ENCODE measurements at regions of chr3 and their contacts with region 1.

Region 1: GRCh38 chr3:69306239-69307185 is 79.4 kb downstream of the FRMD4B start:
- DNase-seq: peak in 9 of 10 donors; percentile 28 to 76 (median 64)
- H3K4me3 ChIP-seq: peak overlapping the region in 10 of 59 donors; percentile 0 to 36 (median 4)
- H3K27ac ChIP-seq: peak overlapping the region; percentile 40 to 97 (median 90)
- H3K27me3 ChIP-seq: peaks cover 0 to 4% (median 0%) of the 10 kb centered on the region in 45 donors
- CTCF ChIP-seq: peak; percentile 84 to 99 (median 95)

Region 2: GRCh38 chr3:69143605-69144004 is 162.9 kb before region 1 on chr3:
- intact Hi-C with region 1: no loop called
- DNase-seq: no peak
- H3K4me3 ChIP-seq: no peak overlapping the region
- H3K27ac ChIP-seq: no peak overlapping the region
- H3K27me3 ChIP-seq: peaks cover 0 to 8% (median 0%) of the 10 kb centered on the region in 45 donors
- CTCF ChIP-seq: no peak

Region 3: GRCh38 chr3:69181592-69182211 is 124.8 kb before region 1 on chr3:
- intact Hi-C with region 1: loop called in 1 of 2 experiments (anchors 5 kb)
- DNase-seq: peak in 2 of 10 donors; percentile 36 to 50
- H3K4me3 ChIP-seq: peak overlapping the region in 3 of 59 donors; percentile 7 to 30 (median 16)
- H3K27ac ChIP-seq: peak overlapping the region; percentile 31 to 96 (median 89)
- H3K27me3 ChIP-seq: no peaks in the 10 kb centered on the region
- CTCF ChIP-seq: peak in 5 of 56 donors; percentile 3 to 15 (median 13)

Region 4: GRCh38 chr3:69353503-69353902 is 47.0 kb after region 1 on chr3:
- intact Hi-C with region 1: no loop called
- DNase-seq: no peak
- H3K4me3 ChIP-seq: peak overlapping the region in 50 of 59 donors; percentile 1 to 55 (median 34)
- H3K27ac ChIP-seq: peak overlapping the region in 57 of 59 donors; percentile 18 to 90 (median 79)
- H3K27me3 ChIP-seq: no peaks in the 10 kb centered on the region
- CTCF ChIP-seq: no peak

Region 5: DNA sequence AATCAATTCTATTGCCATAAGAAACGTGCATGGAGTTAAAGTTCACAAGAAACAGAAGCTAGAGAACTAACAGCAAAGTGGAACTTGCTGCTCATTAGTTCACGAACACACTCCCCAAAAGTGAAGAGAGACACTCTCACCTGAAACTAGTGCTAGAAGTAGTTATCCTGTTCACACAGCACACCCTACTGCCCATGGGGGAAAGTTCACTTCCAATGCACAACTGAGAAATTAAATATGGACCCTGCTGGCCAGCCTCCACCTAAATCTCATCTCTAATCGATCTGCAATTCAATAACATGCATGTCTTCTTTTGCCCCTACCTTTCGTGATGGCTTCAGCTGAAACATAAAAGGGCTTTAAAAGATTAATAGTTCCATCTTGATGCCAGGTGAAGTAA is 118.7 kb after region 1 on chr3:
- intact Hi-C with region 1: loop called in 1 of 2 experiments (anchors 5 kb)
- DNase-seq: peak in 1 of 10 donors; percentile 26
- H3K4me3 ChIP-seq: no peak overlapping the region
- H3K27ac ChIP-seq: peak overlapping the region in 8 of 59 donors; percentile 12 to 53 (median 32)
- H3K27me3 ChIP-seq: peaks cover 0 to 2% (median 0%) of the 10 kb centered on the region in 45 donors
- CTCF ChIP-seq: peak in 55 of 56 donors; percentile 27 to 73 (median 54)

Region 6: DNA sequence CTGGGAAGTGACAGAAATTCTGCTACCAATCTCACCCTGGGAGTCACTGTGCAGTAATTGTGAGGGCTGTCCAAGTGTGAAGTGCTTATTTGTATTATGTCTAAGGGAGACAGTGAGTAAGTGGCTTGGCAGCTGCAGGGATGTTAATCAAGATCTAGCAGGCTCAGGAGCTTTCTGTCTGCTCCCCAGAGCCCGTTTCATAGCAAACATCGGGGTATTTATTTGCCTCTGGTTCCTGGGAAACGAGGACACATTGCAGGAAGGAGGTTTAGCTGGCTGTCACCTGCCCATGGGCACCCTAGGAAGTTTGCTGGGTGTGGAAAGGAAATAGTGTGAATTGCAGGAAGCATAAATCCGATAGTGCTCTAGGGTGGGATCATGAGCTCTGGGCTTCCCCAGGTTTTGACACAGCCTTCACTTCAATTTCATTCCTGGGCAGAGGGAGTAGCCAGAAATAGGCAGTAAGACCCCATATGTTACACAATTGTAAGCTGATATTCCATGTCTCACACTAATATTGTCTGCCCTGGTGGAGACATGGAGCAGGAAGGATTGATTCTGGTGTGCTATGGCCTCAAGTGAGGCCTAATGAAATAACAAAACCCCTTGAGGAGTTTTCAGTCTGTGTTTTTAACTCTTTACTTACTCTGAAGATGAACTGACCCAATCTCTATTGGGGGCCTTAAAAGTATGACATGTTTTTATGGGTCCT is 358.7 kb after region 1 on chr3:
- intact Hi-C with region 1: loop called (anchors 10 kb)
- DNase-seq: no peak
- H3K4me3 ChIP-seq: no peak overlapping the region
- H3K27ac ChIP-seq: peak overlapping the region in 1 of 59 donors; percentile 4
- H3K27me3 ChIP-seq: no peaks in the 10 kb centered on the region
- CTCF ChIP-seq: no peak

Region 7: DNA sequence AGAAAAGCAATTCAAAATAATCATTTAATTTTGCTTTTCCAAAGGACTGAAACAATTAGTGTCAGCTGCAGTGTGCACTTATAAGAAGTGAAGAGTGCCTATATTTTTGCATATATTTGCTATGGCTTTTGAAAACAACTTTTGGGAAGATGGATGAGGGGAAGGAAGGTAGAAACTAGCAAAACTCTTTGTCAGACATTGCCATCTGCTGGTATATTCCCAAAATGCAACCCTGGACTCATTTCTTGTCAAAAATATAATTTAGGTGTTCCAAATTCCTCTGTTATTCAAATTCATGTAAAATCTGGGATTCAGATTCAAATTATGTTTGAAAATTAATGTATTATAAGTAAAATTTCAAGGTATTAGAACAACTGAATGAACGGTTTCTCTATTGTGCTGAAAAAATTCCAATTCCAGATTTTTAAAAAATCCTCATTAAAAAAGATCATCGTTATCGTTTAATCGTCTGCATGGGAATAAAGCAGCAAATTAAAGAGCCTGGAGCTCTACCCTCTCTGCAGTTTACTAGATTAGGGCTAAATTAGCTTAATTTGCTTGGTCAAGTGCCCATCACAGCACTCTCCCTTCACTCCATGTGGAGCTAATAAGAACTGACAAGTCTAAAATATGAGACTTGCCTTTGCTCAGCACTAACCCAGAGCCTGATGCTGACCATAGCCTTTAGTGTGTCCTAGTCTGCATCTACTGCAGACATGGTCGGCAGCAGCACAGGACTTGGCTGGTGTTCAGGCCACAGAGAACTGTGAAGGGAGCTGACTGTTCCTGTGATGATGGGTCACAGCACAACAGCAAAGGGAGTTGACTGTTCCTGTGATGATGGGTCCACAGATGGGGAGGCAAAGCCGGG is 364.8 kb after region 1 on chr3:
- intact Hi-C with region 1: loop called (anchors 10 kb)
- DNase-seq: peak in 2 of 10 donors; percentile 29 to 54
- H3K4me3 ChIP-seq: peak overlapping the region in 1 of 59 donors; percentile 26
- H3K27ac ChIP-seq: peak overlapping the region in 26 of 59 donors; percentile 5 to 75 (median 37)
- H3K27me3 ChIP-seq: peaks cover 0 to 4% (median 0%) of the 10 kb centered on the region in 45 donors
- CTCF ChIP-seq: peak; percentile 65 to 97 (median 86)